A549 (cell line): ENCODE measurements at regions of chr16 and their contacts with region 1.

Region 1: DNA sequence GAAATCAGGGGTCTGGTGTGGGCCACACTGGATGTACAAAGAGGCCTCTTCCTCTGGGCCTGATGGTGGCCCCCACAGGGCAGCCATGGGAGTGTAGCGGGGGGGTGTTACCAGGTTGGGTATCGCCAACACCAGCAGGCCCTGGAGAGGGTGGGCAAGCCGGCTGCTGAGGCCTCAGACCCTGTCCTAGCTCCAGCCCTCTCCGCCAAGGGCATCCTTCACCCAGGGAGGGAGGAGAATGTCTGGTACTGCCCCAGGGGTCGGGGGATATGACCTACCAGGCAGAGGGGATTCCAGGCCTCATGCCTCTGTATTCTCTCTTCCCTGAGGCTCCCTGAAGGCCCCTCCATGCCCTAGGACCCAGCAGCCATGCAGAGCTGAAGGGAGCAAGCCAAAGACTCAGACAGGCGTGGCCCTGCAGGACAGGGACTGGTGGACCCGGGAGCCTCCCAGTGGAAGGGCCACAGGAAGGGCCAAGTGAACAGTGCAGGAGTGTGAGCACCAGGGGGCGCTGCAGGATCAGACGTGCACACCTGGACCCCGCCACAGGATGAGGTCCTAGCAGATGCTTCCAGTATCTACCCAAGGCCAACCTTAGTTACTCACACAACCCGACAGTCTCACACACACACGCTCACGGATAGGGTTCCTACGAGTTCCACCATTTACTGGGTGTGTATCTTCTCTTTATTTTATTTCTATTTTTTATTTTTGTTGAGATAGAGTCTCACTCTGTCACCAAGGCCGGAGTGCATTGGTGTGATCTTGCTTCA is 10.9 kb upstream of the CES4A start:
- DNase-seq: peak; percentile 87 to 91
- ATAC-seq: peak; percentile 98 to 99
- H3K4me3 ChIP-seq: no peak overlapping the region
- H3K27ac ChIP-seq: peak overlapping the region; percentile 16 to 53; a peak in 2 of 6 replicates
- H3K4me1 ChIP-seq: peaks cover 3% of the 10 kb centered on the region; the same call in 1 of the 3 replicates
- CTCF ChIP-seq: peak; percentile 94
- EP300 ChIP-seq: no peak
- POLR2A ChIP-seq: no peak
- RAD21 ChIP-seq: peak; percentile 98

Region 2: GRCh38 chr16:66954097-66954659 is 23.3 kb before region 1 on chr16:
- CTCF ChIA-PET with region 1: interaction called, 216 read pairs
- POLR2A ChIA-PET with region 1: no interaction called
- DNase-seq: peak; percentile 81 to 90
- ATAC-seq: peak; percentile 93 to 96
- H3K4me3 ChIP-seq: no peak overlapping the region
- H3K27ac ChIP-seq: peak overlapping the region; percentile 26 to 38; a peak in 3 of 6 replicates
- H3K4me1 ChIP-seq: peaks cover 8% of the 10 kb centered on the region; the same call in 2 of the 3 replicates
- CTCF ChIP-seq: peak; percentile 89
- EP300 ChIP-seq: no peak
- POLR2A ChIP-seq: no peak
- RAD21 ChIP-seq: peak; percentile 89 to 90

Region 3: GRCh38 chr16:66988197-66988788 is 10.8 kb after region 1 on chr16 and contains the start of gene CES4A:
- CTCF ChIA-PET with region 1: interaction called, 68 read pairs
- POLR2A ChIA-PET with region 1: no interaction called
- DNase-seq: no peak
- ATAC-seq: peak; percentile 57 to 60; a peak in 5 of 6 replicates
- H3K4me3 ChIP-seq: no peak within 1 kb of the TSS
- H3K27ac ChIP-seq: peak within 1 kb of the TSS; percentile 38 to 44; a peak in 2 of 6 replicates
- H3K4me1 ChIP-seq: peaks cover 4% of the 10 kb centered on the region; the same call in 1 of the 3 replicates
- CTCF ChIP-seq: no peak
- EP300 ChIP-seq: no peak
- POLR2A ChIP-seq: no peak
- RAD21 ChIP-seq: no peak
- polyA plus RNA-seq, gene CES4A: 3.5 and 4.4 TPM in 2 replicates

Region 4: GRCh38 chr16:67028555-67029248 is 51.2 kb after region 1 on chr16 and contains the start of gene CBFB:
- CTCF ChIA-PET with region 1: interaction called, 12 read pairs
- POLR2A ChIA-PET with region 1: interaction called, 4 read pairs
- DNase-seq: peak; percentile 95 to 97
- ATAC-seq: peak; percentile 93 to 94
- H3K4me3 ChIP-seq: peak within 1 kb of the TSS; percentile 95
- H3K27ac ChIP-seq: peak within 1 kb of the TSS; percentile 72 to 93
- H3K4me1 ChIP-seq: peaks cover 12% of the 10 kb centered on the region
- CTCF ChIP-seq: no peak
- EP300 ChIP-seq: no peak
- POLR2A ChIP-seq: peak; percentile 96
- RAD21 ChIP-seq: no peak; a peak in 1 of 5 replicates
- polyA plus RNA-seq, gene CBFB: 35.9 and 61.3 TPM in 2 replicates

Region 5: DNA sequence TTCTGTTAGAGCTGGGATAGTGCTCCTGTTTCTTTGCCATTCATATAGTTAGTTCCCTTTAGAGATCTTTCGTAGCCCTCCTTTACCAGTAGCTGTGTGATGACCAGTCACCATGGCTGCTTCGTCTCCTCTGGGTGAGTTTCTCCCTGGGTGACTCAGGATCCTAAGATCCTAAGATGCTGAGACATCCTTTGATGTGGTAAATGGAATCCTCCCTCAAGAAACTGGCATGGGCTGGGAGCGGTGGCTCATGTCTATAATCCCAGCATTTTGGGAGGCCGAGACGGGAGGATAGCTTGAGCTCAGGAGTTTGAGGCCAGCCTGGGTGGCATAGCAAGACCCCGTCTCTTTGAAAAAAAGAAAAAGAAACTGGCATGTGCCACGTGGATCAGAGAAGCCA is 138.1 kb after region 1 on chr16:
- CTCF ChIA-PET with region 1: interaction called, 12 read pairs
- POLR2A ChIA-PET with region 1: no interaction called
- DNase-seq: peak; percentile 58 to 68
- ATAC-seq: peak; percentile 82 to 84
- H3K4me3 ChIP-seq: no peak overlapping the region
- H3K27ac ChIP-seq: peak overlapping the region in 1 of 2 experiments; percentile 72; a peak in 3 of 6 replicates
- H3K4me1 ChIP-seq: peaks cover 44% of the 10 kb centered on the region
- CTCF ChIP-seq: no peak
- EP300 ChIP-seq: no peak
- POLR2A ChIP-seq: no peak
- RAD21 ChIP-seq: no peak

Region 6: DNA sequence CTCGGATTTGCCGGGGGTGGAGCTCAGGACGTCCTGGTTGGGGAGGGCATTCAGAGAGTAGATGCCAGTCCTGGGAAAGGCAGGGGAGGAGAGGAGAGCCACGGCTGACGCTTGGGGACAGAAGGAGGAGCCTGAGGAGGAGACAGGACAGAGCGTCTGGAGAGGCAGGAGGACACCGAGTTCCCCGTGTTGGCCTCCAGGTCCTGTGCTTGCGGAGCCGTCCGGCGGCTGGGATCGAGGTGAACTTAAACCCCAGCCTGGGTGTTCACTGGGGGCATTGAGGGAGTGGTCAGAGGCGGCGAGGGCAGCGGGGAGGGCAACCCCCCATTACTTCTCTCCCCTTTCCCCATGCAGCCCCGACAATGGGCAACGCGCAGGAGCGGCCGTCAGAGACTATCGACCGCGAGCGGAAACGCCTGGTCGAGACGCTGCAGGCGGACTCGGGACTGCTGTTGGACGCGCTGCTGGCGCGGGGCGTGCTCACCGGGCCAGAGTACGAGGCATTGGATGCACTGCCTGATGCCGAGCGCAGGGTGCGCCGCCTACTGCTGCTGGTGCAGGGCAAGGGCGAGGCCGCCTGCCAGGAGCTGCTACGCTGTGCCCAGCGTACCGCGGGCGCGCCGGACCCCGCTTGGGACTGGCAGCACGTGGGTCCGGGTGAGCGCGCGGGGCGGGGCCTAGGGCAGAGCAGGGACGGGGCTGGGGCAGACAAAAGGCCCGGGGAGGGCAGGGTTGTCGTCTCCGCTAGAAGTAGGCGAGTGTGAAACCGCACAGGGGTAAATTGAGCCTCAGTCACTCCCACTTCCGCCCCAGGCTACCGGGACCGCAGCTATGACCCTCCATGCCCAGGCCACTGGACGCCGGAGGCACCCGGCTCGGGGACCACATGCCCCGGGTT is 196.5 kb after region 1 on chr16:
- CTCF ChIA-PET with region 1: interaction called, 10 read pairs
- POLR2A ChIA-PET with region 1: no interaction called
- DNase-seq: peak; percentile 89 to 91
- ATAC-seq: peak; percentile 59 to 82
- H3K4me3 ChIP-seq: peak overlapping the region; percentile 50
- H3K27ac ChIP-seq: peak overlapping the region; percentile 84 to 87
- H3K4me1 ChIP-seq: peaks cover 45% of the 10 kb centered on the region
- CTCF ChIP-seq: peak; percentile 26; the same call in 1 of the 3 replicates
- EP300 ChIP-seq: no peak
- POLR2A ChIP-seq: peak; percentile 62
- RAD21 ChIP-seq: peak in 1 of 2 experiments; percentile 28; a peak in 2 of 5 replicates

Region 7: DNA sequence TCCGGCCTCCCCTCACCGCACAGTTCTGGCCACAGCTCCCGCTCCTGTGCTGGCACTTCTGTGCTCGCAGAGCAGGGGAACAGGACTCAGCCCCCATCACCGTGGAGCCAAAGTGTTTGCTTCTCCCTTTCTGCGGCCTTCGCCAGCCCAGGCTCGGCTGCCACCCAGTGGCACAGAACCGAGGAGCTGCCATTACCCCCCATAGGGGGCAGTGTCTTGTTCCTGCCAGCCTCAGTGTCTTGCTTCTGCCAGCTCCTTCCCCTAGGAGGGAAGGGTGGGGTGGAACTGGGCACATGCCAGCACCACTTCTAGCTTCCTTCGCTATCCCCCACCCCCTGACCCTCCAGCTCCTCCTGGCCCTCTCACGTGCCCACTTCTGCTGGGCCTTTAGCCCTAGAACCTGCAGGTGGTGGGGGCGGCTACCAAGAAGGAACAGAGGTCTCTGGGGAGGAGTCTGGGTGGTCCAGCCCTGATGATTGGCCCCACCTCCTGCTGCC is 220.8 kb after region 1 on chr16:
- CTCF ChIA-PET with region 1: interaction called, 12 read pairs
- POLR2A ChIA-PET with region 1: no interaction called
- DNase-seq: peak; percentile 66 to 93
- ATAC-seq: peak; percentile 76 to 89
- H3K4me3 ChIP-seq: no peak overlapping the region
- H3K27ac ChIP-seq: no peak overlapping the region
- H3K4me1 ChIP-seq: peaks cover 19% of the 10 kb centered on the region
- CTCF ChIP-seq: peak; percentile 76
- EP300 ChIP-seq: no peak
- POLR2A ChIP-seq: no peak
- RAD21 ChIP-seq: peak; percentile 44 to 47; a peak in 3 of 5 replicates

Region 8: DNA sequence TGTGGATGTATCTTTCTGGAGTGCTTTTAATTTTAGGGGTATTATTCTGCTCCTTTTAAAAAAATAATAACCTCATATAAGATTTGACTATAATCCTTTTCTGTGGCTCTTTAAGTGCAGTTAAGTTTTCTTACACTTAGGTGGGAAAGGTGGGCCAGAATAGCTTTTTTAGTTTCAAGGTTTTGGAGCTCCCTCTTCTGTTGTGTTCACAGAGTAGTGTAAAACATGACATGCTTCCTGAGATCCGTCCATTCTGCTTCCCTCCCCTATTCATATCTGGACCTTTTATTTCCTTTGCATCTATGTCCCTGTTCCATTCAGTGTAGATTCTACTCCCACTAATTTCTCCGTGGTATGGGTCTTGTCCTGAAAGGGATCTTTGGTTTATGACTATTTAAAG is 361.9 kb after region 1 on chr16:
- CTCF ChIA-PET with region 1: no interaction called
- POLR2A ChIA-PET with region 1: no interaction called
- DNase-seq: peak in 1 of 2 experiments; percentile 45
- ATAC-seq: peak; percentile 59 to 75; a peak in 5 of 6 replicates
- H3K4me3 ChIP-seq: no peak overlapping the region
- H3K27ac ChIP-seq: no peak overlapping the region
- H3K4me1 ChIP-seq: no peaks in the 10 kb centered on the region
- CTCF ChIP-seq: peak; percentile 37
- EP300 ChIP-seq: no peak
- POLR2A ChIP-seq: no peak
- RAD21 ChIP-seq: peak; percentile 53 to 62; a peak in 4 of 5 replicates